ENCODE measurements at regions of chr22 and their contacts with region 1.

Region 1: DNA sequence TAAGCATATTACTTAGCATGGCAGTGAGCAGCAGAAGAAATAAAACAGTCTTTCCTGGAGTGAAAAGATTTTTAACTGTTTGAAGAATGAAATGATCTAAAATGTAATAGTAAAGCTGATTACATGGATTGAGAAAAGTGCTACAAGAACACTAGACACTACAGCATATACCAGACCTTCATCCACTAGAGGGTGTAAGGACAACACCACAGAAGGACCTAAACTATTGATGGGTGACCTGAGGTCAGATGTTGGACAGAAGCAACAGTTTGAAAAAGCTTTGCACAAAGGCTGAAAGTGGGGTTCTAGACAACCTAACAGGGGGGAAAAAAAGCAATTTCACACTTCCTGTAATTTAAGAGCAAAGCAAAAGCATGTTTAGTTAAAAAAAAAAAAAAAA is 97.7 kb downstream of the RBFOX2 start:
- DNase-seq: peak in 2 of 6 donors; percentile 26 to 27
- ATAC-seq: peak; percentile 92 to 100 (median 98)
- H3K4me3 ChIP-seq: no peak overlapping the region
- H3K27ac ChIP-seq: no peak overlapping the region
- H3K4me1 ChIP-seq: no peaks in the 10 kb centered on the region
- H3K27me3 ChIP-seq: no peaks in the 10 kb centered on the region
- CTCF ChIP-seq: peak in 3 of 4 donors; percentile 15 to 52 (median 41)

Region 2: DNA sequence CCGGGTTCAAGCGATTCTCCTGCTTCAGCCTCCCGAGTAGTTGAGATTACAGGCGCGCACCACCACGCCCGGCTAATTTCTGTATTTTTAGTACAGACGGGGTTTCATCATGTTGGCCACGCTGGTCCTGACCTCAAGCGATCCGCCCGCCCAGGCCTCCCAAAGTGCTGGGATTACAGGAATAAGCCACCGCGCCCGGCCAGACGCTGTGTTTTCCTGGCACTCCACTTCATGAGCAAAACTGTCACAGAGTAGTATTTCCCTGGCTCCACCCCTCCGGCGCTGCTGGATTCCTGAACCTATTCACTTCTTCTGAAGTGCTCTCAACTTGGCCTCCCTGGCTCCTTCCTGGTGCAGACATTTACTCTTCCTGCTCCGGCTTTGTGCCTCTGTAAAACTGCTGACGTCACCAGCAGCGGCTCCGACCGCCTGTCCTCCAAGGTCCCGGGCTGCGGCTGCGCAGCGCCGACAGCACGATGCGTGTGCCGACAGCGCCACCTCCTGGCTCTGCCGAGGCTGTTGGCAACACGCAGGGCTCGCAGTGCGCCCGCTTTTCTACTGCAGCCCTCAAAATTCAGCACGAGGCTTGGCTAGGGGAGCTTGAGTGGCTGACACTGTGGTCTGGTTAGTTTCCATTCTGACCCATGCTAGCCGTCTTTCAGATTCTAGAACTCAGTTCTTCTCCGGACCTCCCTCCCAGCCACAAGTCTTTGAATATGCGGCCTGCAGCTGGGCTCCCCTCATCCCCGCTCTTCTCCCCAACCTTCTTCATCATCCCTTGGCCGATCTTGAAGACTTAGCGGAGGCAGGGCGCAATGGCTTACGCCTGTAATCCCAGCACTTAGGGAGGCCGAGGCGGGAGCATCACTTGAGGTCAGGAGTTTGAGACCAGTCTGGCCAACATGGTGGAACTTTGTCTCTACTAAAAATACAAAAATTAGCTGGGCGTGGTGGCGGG is 193.0 kb after region 1 on chr22:
- intact Hi-C with region 1: loop called in 2 of 3 experiments (anchors 5 to 10 kb)
- DNase-seq: peak; percentile 95 to 98 (median 96)
- ATAC-seq: peak; percentile 98 to 99 (median 99)
- H3K4me3 ChIP-seq: peak overlapping the region in 2 of 4 donors; percentile 8 to 21
- H3K27ac ChIP-seq: peak overlapping the region; percentile 73 to 90 (median 79)
- H3K4me1 ChIP-seq: peaks cover 0 to 2% (median 0%) of the 10 kb centered on the region in 3 donors
- H3K27me3 ChIP-seq: no peaks in the 10 kb centered on the region
- CTCF ChIP-seq: peak; percentile 92 to 98 (median 95)

Measured in pancreas (tissue), 10 donors.